ENCODE measurements at regions of chr11 and their contacts with region 1.

Region 1: DNA sequence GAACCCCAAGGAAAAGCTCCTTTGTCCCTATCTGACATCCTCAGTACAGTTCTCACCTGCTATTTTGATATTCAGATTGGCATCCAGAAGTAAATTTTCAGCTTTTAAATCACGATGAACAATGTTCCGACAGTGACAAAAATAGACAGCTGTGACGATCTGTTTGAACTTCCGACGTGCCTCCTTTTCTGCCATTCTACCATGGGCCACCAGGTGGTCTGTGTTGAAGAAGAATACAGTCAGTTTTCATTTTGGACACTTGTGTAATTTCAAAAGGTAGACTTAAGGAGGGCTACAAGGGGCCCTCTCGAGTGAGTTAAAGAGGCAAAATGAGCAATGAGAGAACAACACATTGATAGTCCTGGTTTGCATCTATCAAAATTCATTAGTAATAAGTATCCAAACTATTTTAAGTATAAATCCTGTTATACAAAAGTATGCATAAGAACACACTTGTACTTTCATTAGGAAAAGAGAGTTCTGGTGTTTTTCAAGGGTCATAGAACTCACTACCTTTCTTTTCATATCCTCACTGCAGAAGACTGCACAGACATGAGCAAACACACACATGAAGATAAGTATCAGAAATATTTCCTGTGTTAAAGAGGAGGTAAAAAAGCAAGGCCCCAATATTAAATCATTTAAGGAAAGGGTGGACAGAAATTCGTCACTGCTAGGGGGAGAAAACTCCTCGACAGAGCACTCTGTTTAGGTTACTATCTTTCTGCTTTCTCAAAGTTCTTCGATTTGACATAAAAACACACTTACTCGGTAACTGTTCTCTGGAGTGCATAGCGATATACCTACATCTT is 89.9 kb upstream of the APOA1 start:
- DNase-seq: peak; percentile 68
- H3K4me3 Mint-ChIP-seq: peak overlapping the region; percentile 38
- H3K27ac Mint-ChIP-seq: peak overlapping the region; percentile 74
- H3K4me1 Mint-ChIP-seq: peaks cover 76% of the 10 kb centered on the region
- H3K27me3 Mint-ChIP-seq: no peaks in the 10 kb centered on the region

Region 2: GRCh38 chr11:116879800-116880625 is 47.4 kb before region 1 on chr11:
- CTCF ChIA-PET with region 1: interaction called, 6 read pairs
- POLR2A ChIA-PET with region 1: no interaction called
- intact Hi-C with region 1: loop called (anchors 1 kb)
- DNase-seq: no peak
- H3K4me3 Mint-ChIP-seq: no peak overlapping the region
- H3K27ac Mint-ChIP-seq: no peak overlapping the region
- H3K4me1 Mint-ChIP-seq: peaks cover 28% of the 10 kb centered on the region
- H3K27me3 Mint-ChIP-seq: no peaks in the 10 kb centered on the region

Region 3: DNA sequence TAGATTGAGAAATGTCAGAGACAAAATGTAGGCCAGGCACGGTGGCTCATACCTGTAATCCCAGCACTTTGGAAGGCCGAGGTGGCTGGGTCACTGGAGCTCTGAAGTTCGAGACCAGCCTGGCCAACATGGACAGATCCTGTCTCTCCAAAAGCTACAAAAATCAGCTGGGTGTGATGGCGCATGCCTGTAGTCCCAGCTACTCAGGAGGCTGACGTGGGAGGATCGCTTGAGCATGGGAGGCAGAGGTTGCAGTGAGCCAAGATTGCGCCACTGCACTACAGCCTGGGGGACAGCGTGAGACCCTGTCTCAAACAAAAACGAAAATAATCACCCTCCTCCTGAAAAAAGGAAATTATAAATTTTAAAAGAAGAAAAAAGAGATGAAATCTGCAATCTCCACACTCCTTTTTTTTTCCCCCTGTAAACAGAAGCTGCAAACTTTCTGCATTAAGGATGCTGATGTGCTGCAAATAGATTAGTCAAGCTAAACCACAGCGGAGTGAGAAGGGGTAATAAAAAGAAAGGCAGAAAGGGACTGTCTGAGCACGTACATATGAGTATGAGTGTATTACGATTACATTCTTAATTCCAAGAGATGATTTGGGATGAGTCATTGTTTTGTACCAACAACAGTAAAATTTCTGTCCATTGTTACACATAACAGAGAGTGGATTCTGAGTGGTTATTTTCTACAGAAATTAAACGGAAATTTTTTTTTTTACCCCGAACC is 83.6 kb after region 1 on chr11:
- CTCF ChIA-PET with region 1: interaction called, 3 read pairs
- POLR2A ChIA-PET with region 1: interaction called, 8 read pairs
- intact Hi-C with region 1: loop called (anchors 1 kb)
- DNase-seq: no peak
- H3K4me3 Mint-ChIP-seq: no peak overlapping the region
- H3K27ac Mint-ChIP-seq: peak overlapping the region; percentile 84
- H3K4me1 Mint-ChIP-seq: peaks cover 51% of the 10 kb centered on the region
- H3K27me3 Mint-ChIP-seq: no peaks in the 10 kb centered on the region

Region 4: DNA sequence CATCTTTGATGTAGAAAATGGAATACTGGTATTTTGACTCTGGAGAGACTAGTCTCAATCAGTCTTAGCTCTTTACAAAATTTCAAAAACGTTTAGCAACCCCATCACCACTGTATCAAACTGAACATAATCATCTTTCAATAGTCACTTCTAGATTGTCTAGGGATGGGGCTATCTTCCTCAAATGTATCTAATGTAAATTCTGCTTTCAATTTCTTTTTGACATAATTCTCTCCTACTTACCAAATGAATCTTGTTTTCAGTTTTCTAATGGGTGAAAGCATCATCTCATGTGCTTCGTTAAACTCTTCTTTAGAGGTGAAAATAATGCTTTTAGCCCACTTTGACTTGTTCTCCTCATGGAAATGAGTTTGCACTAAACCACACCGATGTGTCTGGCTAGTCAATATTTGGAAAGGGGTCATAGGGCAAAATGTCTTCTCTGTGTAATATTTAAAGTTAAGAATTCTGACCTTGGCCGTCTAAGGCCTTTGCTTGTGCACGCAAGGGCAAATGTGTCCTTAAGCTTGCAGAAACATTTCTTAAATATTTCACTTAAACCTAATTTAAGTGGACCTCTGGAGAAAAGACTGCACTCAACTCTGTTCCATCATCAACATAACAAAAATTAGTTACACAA is 165.7 kb after region 1 on chr11:
- CTCF ChIA-PET with region 1: interaction called, 10 read pairs
- POLR2A ChIA-PET with region 1: interaction called, 8 read pairs
- intact Hi-C with region 1: loop called (anchors 1 kb)
- DNase-seq: no peak
- H3K4me3 Mint-ChIP-seq: peak overlapping the region; percentile 40
- H3K27ac Mint-ChIP-seq: peak overlapping the region; percentile 73
- H3K4me1 Mint-ChIP-seq: peaks cover 75% of the 10 kb centered on the region
- H3K27me3 Mint-ChIP-seq: no peaks in the 10 kb centered on the region

Region 5: DNA sequence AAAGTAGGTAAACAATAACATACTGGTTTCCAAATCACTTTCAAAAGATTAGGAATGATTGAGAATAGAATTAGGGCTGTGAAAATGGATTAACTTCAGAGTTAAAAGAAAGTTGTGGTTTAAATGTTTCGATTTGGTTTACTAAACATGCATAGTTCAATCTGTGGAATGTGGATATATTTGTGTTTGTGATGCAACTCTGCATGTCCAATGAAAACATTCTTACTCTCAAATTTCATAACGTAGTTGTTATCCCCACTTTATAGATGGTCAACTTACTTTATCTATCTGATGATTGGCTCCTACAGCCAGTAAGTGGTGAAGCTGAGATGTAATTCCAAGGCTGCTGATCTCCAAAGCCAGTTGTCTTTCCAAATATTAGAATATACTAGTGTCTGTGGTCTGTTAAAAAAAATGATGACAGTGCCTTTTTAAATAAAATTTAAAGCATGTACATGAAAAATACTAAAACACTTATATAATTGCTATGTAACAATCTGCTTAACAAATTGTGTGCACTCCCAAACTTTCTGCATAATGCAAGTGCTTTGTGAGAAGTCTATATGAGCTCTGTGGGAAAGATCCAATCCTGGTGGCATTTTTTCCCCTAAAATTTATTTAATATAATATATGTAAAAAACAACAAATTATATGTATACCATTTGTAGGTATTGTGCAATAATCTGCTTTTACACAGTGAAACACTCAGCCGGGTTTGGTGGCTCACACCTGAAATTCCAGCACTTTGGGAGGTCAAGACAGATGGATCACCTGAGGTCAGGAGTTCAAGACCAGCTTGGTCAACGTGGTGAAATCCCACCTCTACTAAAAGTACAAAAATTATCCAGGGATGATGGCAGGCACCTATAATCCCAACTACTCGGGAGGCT is 180.6 kb after region 1 on chr11:
- CTCF ChIA-PET with region 1: interaction called, 10 read pairs
- POLR2A ChIA-PET with region 1: no interaction called
- intact Hi-C with region 1: no loop called
- DNase-seq: no peak
- H3K4me3 Mint-ChIP-seq: no peak overlapping the region
- H3K27ac Mint-ChIP-seq: no peak overlapping the region
- H3K4me1 Mint-ChIP-seq: no peaks in the 10 kb centered on the region
- H3K27me3 Mint-ChIP-seq: no peaks in the 10 kb centered on the region

Measured in activated CD4-positive, alpha-beta memory T cell treated with anti-CD3 and anti-CD28 coated beads for 36 hours (primary cell).